WTC11 (cell line): ENCODE measurements at regions of chr7 and their contacts with region 1.

Region 1: DNA sequence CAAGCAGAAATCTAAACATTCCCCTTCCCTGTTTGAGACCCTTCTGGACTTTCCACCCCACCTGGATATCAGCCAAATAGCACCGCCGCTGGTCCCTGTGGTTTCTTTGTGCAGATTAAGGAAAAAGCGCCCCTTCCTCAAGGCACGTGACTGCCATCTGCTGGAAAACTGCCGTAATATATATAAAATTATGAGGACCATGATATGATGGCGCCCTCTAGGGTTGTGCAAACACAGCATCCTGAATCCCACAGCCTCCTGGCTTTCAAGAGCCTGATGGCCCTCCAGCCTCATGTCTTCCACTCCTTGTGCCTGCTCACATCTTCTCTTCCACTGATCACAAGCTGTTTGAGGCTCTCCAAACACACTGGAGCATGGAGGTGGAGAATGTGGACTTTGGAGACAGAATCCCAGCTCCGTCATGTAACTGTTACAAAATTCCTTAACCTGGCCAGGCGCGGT is 121.3 kb downstream of the MYL10 start:
- DNase-seq: peak; percentile 74
- ATAC-seq: peak; percentile 68
- H3K4me3 Mint-ChIP-seq: peak overlapping the region; percentile 24
- H3K27ac Mint-ChIP-seq: peak overlapping the region; percentile 18
- H3K4me1 Mint-ChIP-seq: peaks cover 37% of the 10 kb centered on the region
- H3K27me3 Mint-ChIP-seq: no peaks in the 10 kb centered on the region
- CTCF ChIP-seq: peak; percentile 81

Region 2: GRCh38 chr7:101519324-101520023 is 11.7 kb after region 1 on chr7:
- CTCF ChIA-PET with region 1: interaction called, 10 read pairs
- POLR2A ChIA-PET with region 1: no interaction called
- DNase-seq: no peak
- ATAC-seq: no peak
- H3K4me3 Mint-ChIP-seq: no peak overlapping the region
- H3K27ac Mint-ChIP-seq: no peak overlapping the region
- H3K4me1 Mint-ChIP-seq: peaks cover 18% of the 10 kb centered on the region
- H3K27me3 Mint-ChIP-seq: no peaks in the 10 kb centered on the region
- CTCF ChIP-seq: no peak

Region 3: GRCh38 chr7:101717628-101718357 is 210.0 kb after region 1 on chr7:
- CTCF ChIA-PET with region 1: no interaction called
- POLR2A ChIA-PET with region 1: no interaction called
- DNase-seq: no peak
- ATAC-seq: peak; percentile 33
- H3K4me3 Mint-ChIP-seq: no peak overlapping the region
- H3K27ac Mint-ChIP-seq: no peak overlapping the region
- H3K4me1 Mint-ChIP-seq: no peaks in the 10 kb centered on the region
- H3K27me3 Mint-ChIP-seq: no peaks in the 10 kb centered on the region; the same call in 1 of the 2 replicates
- CTCF ChIP-seq: no peak

Region 4: GRCh38 chr7:101754424-101755159 is 246.8 kb after region 1 on chr7:
- CTCF ChIA-PET with region 1: no interaction called
- POLR2A ChIA-PET with region 1: no interaction called
- DNase-seq: no peak
- ATAC-seq: no peak
- H3K4me3 Mint-ChIP-seq: no peak overlapping the region
- H3K27ac Mint-ChIP-seq: no peak overlapping the region; the same call in 1 of the 2 replicates
- H3K4me1 Mint-ChIP-seq: no peaks in the 10 kb centered on the region
- H3K27me3 Mint-ChIP-seq: no peaks in the 10 kb centered on the region
- CTCF ChIP-seq: no peak